ENCODE measurements at regions of chr2 and their contacts with region 1.

Region 1: DNA sequence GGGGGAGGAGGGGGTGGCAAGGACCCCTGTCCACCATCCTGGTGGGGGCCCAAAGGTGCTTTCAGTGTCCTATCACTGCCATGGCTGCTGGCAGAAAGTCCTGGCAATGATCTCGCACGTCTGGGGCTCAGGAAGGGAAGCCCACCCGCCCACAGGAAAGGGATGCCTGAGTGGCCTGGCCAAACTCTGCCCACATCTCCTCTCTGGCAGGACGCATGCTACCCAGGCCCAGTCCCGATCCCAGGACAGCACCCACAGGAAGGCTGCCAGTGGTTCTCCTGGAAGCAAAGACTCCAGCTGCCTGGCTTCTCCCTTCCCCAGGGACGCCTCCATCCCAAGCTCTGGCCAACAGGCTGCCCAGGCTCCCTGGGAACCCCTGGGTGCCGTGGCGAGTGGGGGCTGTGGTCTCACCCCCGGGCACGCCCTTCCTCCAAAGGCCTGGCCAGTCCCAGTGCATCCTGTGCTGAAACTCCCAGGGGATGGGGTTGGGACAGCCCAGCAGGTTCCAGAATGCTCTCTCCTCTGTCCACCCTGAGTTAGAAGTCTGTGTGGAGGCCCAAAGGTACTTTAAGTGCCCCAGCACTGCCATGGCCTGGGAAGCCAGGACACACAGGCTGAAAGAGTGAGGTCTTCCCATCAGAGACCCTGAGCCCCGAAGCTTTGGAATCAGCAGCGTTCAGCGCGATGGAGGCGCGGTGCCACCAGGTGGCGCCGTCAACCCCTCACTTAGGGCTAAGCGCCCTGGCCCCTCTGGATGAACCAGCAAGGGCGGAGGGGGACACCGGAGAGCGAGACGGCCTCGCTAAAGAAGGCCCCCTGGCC is 29.8 kb upstream of the TAF1B start:
- DNase-seq: peak; percentile 77
- ATAC-seq: peak; percentile 93
- H3K4me3 Mint-ChIP-seq: no peak overlapping the region
- H3K27ac Mint-ChIP-seq: no peak overlapping the region
- H3K4me1 Mint-ChIP-seq: peaks cover 15% of the 10 kb centered on the region
- H3K27me3 Mint-ChIP-seq: peaks cover 19% of the 10 kb centered on the region

Region 2: DNA sequence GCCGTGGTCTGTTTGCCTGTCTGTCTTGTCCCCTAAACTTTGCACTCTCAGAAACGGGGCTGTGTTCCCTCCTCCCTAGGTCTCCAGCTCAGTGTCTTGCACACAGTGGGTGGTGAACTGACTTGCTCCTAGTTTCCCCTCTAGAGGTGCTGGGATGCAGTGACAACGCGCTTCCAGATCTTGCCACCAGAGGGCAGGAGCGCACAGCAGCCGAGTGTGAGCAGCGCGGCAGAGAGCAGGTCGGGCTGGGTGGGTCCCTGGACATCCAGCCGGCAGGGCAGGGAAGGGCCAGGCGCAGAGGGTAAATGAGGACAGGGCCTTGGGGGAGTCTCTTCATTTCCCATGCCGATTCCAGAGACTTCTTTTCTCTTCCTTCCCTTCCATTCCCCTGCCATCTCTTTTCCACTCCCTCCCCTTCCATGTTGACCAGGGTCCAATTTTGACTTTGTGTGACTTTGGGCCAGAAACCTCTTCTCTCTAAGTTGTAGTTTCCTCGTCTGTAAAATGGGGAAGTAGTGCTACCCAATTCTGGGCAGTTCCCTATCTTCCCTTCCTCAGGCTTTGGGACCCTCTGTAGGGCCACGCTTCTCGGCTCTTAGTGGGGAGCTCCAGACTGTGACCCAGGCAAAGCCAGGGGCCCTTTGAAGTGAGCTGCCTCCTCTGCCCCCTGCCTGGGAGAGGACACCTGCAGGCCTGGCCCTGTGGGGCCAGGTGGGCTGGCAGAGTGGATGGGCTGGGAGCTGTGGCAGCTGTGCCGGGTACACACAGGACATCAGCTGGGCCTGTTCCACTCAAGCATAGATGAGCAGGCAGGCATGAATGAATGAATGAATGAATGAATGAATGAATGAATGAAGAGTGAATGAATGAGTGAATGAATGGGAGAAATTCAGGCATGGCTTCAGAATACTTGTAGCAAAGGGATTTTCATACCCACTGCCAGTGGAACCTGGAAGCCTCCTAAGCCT is 13.6 kb before region 1 on chr2:
- CTCF ChIA-PET with region 1: interaction called, 97 read pairs
- POLR2A ChIA-PET with region 1: no interaction called
- DNase-seq: peak; percentile 91
- ATAC-seq: peak; percentile 96
- H3K4me3 Mint-ChIP-seq: peak overlapping the region; percentile 60
- H3K27ac Mint-ChIP-seq: peak overlapping the region; percentile 88
- H3K4me1 Mint-ChIP-seq: peaks cover 38% of the 10 kb centered on the region
- H3K27me3 Mint-ChIP-seq: peaks cover 4% of the 10 kb centered on the region

Region 3: DNA sequence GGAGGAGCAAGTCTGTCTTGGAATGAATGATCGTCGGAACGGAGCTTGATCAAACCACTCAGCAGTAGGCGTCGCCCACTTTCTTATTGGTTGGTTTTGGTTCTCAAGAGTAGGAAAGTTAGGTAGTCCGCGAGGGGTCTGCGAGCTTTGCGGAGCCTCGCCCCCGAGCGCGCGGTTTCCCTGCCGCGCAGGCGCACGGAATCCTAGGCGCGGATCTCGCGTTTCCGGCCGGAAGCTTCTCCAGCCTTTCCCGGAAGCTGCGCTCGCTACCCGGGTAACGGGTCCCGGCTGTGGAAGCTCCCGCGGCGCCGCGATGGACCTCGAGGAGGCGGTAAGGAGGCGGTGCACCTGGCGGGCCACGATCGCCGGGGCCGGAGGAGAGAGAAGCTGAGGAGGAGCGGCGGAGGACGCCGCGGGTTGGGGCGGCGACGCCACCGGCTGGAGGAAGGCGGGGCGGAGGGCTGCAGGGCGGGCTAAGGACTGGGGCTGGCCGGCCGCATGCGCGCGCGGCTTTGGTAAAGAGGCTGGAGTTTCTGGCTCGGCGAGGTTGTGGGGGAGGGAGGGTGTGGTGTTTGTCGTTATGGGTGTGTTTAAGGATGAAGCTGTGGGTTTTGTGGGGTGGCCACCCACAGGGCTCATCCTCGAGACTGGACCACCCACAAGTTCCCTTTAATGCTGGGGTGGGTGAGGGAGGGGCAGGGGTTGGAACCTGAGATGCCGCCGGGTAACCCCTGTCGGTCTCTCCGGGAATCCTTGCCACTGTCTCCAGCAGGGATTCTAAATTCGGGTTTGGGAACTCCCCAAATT is 29.9 kb after region 1 on chr2 and contains the start of gene TAF1B:
- CTCF ChIA-PET with region 1: interaction called, 58 read pairs
- POLR2A ChIA-PET with region 1: interaction called, 6 read pairs
- DNase-seq: peak; percentile 94
- ATAC-seq: peak; percentile 92
- H3K4me3 Mint-ChIP-seq: peak within 1 kb of the TSS; percentile 92
- H3K27ac Mint-ChIP-seq: peak within 1 kb of the TSS; percentile 96
- H3K4me1 Mint-ChIP-seq: peaks cover 45% of the 10 kb centered on the region
- H3K27me3 Mint-ChIP-seq: peaks cover 4% of the 10 kb centered on the region
- total RNA-seq, gene TAF1B: 33.0 to 35.6 TPM

Region 4: DNA sequence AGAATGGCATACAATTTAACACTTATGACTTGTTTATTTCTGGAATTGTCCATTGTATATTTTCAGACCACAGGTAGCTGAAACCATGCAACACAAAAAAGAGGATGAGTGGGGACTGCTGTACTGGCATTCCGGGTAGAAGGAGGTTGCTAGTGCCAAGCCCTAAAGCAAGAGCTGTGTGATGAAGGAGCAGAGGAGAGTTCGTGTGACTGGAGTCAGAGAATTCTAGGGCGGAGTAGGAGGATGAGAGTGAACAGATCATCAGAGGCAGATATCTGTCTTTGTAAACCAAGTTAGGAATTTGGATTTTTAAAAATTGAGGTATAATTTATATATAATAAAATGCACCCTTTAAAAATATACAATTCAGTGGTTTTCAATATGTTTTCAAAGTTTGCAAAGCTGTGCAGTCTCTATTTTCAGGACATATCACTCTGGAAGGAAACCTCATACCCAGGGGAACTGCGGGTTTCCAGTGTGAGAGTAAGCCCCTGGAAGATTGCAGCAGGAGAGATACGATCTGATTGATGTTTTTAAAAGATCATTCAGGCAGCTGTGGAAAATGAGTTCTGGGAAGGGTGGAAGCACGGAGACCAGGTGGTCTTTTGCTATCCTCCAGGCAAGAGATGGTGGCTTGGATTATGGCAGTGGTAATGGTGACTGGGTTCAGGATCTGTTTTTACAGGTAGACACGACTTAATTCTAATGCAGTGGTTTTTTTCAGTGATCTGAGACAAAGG is 66.1 kb after region 1 on chr2:
- CTCF ChIA-PET with region 1: no interaction called
- POLR2A ChIA-PET with region 1: no interaction called
- DNase-seq: no peak
- ATAC-seq: no peak
- H3K4me3 Mint-ChIP-seq: no peak overlapping the region
- H3K27ac Mint-ChIP-seq: no peak overlapping the region
- H3K4me1 Mint-ChIP-seq: no peaks in the 10 kb centered on the region
- H3K27me3 Mint-ChIP-seq: no peaks in the 10 kb centered on the region

Region 5: DNA sequence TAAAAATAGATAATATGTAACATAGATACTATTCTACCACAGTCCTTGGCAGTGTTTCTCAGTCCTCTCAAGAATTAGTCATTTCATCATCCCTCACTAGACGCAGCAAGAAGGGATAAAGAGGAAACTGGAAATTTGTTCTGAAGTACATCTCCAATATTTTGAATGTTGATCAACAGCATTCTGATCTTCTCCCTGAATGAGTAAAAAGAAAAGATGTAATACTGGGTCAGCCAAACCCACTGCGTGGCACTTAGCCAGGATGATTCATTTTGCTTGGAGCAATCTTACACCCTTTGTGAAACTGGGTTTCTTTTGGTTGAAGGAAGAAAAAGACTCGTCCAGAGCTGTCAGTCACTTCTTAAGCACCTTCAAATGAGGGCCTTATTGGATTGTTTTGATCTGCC is 83.8 kb after region 1 on chr2:
- CTCF ChIA-PET with region 1: interaction called, 24 read pairs
- POLR2A ChIA-PET with region 1: no interaction called
- DNase-seq: no peak
- ATAC-seq: peak; percentile 33
- H3K4me3 Mint-ChIP-seq: no peak overlapping the region
- H3K27ac Mint-ChIP-seq: no peak overlapping the region
- H3K4me1 Mint-ChIP-seq: peaks cover 17% of the 10 kb centered on the region
- H3K27me3 Mint-ChIP-seq: no peaks in the 10 kb centered on the region

Region 6: DNA sequence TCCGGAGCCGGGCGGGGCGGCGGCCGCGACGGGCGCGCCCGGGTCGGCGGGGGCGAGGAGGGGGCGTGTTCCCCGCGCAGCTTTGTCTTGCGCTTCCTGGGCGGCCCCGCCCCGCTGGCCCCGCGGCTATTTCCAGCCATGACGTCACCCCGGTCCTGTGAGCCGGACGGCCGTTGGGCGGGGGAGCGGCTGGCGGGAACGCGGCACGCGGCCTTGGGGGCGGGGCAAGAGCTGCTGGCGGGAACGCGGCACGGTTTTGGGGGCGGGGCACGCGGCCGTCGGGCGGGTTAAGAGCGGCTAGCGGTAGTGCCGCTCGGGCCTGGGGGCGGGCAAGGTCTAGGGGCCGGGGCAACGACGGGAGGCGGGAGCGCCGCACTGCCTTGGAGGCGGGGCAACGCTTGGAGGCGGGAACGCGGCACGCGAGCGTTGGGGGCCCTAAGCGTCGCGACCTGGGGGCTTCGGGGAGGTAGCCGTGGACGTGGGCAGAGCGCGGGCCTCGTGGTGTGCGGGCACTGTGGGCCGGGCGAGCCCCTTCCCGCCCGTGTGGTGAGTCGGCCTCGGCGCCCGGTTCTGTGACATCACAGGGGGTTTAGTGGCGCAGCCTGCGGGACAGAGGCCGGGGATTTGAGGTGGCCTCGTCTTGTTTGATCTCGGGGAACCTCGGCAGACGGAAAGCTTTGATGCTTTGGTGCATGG is 230.5 kb after region 1 on chr2:
- CTCF ChIA-PET with region 1: interaction called, 80 read pairs
- POLR2A ChIA-PET with region 1: interaction called, 3 read pairs
- DNase-seq: peak; percentile 94
- ATAC-seq: peak; percentile 74
- H3K4me3 Mint-ChIP-seq: peak overlapping the region; percentile 72
- H3K27ac Mint-ChIP-seq: peak overlapping the region; percentile 85
- H3K4me1 Mint-ChIP-seq: peaks cover 24% of the 10 kb centered on the region
- H3K27me3 Mint-ChIP-seq: peaks cover 23% of the 10 kb centered on the region